ENCODE measurements at regions of chr2 and their contacts with region 1.

Region 1: DNA sequence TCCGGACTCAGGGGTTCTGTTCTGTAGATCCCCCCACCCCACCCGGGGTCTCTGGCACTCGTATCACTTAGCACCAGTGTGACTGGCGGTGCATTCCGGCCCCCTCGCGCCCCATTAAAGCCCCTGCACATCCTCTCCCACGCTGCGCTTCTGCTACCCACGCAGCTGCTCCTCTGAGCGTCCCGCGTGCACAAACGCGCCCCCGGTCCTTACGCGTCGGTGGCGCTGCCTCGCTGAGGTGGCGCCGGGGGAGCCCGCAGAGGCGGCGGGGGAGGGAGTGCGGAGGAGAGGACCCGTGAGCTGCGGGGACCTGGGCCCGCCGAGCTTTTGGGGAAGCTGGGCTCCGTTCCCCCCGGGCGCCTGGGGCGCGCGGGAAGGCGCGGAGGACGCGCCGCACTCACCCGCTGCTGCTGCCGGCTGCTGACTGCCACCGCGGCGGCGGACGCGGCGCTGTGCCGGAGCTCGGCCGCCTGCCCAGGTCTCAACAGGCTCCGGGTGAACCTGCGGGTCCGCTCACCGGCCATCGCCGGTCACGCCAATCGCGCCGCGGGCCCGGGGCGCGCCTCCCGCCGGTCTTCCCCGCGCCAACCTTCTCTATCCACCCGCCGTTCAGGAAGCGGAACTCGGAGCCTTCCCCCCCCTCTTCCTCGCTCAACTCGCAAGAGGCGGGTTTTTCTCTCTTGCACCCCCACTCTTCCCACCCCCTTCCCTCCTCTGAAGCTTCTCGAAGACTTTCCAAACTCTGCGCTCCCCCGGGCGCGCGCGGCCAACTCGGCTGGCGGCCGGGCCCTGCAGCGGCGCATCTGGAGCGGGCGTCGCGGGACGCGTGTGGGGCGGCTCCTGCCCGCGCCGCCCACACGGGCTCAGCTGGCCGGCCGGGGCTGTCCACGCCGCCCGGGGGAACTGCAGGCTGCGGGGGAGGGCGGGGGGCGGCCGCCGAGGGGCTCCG is at the start of gene DOCK10:
- DNase-seq: peak in 1 of 2 experiments; percentile 57
- H3K4me3 ChIP-seq: peak within 1 kb of the TSS; percentile 53; the same call in 1 of the 2 replicates
- H3K27ac ChIP-seq: no peak within 1 kb of the TSS
- H3K4me1 ChIP-seq: no peaks in the 10 kb centered on the region
- H3K27me3 ChIP-seq: peaks cover 64% of the 10 kb centered on the region
- CTCF ChIP-seq: no peak
- total RNA-seq, gene DOCK10: 28.9 and 33.6 TPM in 2 replicates

Region 2: DNA sequence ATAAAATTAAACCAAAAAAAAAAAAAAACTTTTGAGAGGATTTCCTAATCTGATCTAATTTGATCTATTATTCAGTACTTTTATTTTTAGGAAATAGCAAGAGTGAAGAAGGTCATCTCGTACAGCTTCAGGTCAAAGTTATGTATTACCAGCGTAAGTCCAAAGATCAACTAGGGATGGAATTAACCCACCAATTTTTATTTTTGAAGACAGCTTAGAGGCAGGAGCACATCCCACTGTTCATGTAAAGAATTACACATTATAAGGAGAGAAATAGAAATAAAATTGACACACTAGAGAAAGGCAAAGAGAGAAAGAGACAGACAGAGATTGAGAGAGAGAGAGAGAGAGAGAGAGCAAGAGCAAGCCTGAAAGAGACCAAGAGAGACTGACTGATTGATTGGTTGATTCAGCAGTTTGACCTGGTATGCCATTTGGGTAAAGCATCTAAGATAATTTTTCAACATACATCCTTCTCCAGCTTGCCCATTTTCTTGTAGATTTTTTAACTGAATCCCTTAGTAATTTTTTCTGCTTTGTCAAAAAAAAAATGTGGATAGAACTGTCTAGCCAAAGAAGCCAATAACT is 24.9 kb before region 1 on chr2:
- CTCF ChIA-PET with region 1: no interaction called
- POLR2A ChIA-PET with region 1: interaction called, 20 read pairs
- intact Hi-C with region 1: no loop called
- DNase-seq: no peak
- H3K4me3 ChIP-seq: no peak overlapping the region
- H3K27ac ChIP-seq: no peak overlapping the region
- H3K4me1 ChIP-seq: no peaks in the 10 kb centered on the region; the same call in 1 of the 2 replicates
- H3K27me3 ChIP-seq: no peaks in the 10 kb centered on the region
- CTCF ChIP-seq: no peak; the same call in 1 of the 2 replicates

Region 3: GRCh38 chr2:225025917-225026571 is 16.1 kb before region 1 on chr2:
- CTCF ChIA-PET with region 1: no interaction called
- POLR2A ChIA-PET with region 1: no interaction called
- intact Hi-C with region 1: loop called (anchors 1 kb)
- DNase-seq: peak in 1 of 2 experiments; percentile 38
- H3K4me3 ChIP-seq: no peak overlapping the region
- H3K27ac ChIP-seq: no peak overlapping the region
- H3K4me1 ChIP-seq: peaks cover 11% of the 10 kb centered on the region
- H3K27me3 ChIP-seq: no peaks in the 10 kb centered on the region
- CTCF ChIP-seq: no peak

Region 4: DNA sequence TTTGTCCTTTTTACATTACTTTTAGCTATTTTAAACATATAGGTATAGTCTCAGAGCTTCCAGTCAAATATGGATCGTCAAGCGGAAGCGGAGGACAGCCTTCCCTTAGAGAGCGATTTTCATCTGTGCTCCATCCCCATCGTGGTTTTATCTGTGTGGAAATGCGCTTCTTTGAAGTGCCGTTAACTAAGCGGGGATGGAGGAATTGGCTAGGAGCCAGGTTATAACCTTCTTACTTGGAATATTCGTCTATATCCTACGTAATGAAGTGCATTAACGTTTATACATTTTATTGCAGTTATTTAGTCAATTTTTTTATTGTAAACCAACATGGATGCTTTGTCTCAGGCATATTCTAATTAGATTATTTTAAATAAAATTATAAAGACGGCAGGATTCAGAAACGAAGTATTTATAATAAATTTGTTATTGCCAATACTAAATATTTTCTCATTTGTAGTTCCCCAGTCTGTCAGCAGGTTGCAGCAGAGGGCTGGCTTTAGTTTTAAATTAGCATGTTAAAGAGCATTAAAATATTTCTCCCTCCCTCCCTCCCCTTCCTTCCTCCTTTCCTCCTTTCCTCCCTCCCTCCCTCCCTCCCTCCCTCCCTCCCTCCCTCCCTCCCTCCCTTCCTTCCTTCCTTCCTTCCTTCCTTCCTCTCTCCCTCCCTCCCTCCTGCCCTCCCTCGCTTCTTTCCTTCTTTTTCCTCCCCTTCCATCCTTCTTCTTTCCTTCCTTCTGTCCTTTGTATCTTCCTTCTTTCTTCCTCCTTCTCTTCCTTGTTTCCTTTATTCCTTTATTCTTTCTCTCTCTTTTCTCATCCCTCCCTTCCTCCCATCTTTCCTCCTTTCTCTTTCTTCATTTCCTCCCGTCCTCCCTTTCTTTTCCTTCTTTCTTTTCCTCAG is 80.7 kb after region 1 on chr2:
- CTCF ChIA-PET with region 1: no interaction called
- POLR2A ChIA-PET with region 1: no interaction called
- intact Hi-C with region 1: loop called (anchors 2 kb)
- DNase-seq: peak in 1 of 2 experiments; percentile 24
- H3K4me3 ChIP-seq: no peak overlapping the region
- H3K27ac ChIP-seq: no peak overlapping the region
- H3K4me1 ChIP-seq: peaks cover 15% of the 10 kb centered on the region
- H3K27me3 ChIP-seq: no peaks in the 10 kb centered on the region
- CTCF ChIP-seq: peak; percentile 78

Region 5: GRCh38 chr2:225177098-225177497 is 135.0 kb after region 1 on chr2:
- CTCF ChIA-PET with region 1: no interaction called
- POLR2A ChIA-PET with region 1: interaction called, 17 read pairs
- intact Hi-C with region 1: no loop called
- DNase-seq: peak in 1 of 2 experiments; percentile 25
- H3K4me3 ChIP-seq: no peak overlapping the region
- H3K27ac ChIP-seq: no peak overlapping the region
- H3K4me1 ChIP-seq: no peaks in the 10 kb centered on the region
- H3K27me3 ChIP-seq: no peaks in the 10 kb centered on the region
- CTCF ChIP-seq: no peak

Measured in PC-9 (cell line).